ENCODE measurements at regions of chr1 and their contacts with region 1.

Region 1: GRCh38 chr1:183543619-183544204 is 46.5 kb downstream of the NCF2 start:
- DNase-seq: peak in 1 of 2 experiments; percentile 62
- H3K4me3 ChIP-seq: no peak overlapping the region
- H3K4me3 Mint-ChIP-seq: no peak overlapping the region
- H3K27ac Mint-ChIP-seq: no peak overlapping the region
- H3K4me1 ChIP-seq: peaks cover 6% of the 10 kb centered on the region; the same call in 1 of the 2 replicates
- H3K4me1 Mint-ChIP-seq: peaks cover 13% of the 10 kb centered on the region
- H3K27me3 ChIP-seq: no peaks in the 10 kb centered on the region
- H3K27me3 Mint-ChIP-seq: no peaks in the 10 kb centered on the region
- CTCF ChIP-seq: peak; percentile 57 to 80

Region 2: DNA sequence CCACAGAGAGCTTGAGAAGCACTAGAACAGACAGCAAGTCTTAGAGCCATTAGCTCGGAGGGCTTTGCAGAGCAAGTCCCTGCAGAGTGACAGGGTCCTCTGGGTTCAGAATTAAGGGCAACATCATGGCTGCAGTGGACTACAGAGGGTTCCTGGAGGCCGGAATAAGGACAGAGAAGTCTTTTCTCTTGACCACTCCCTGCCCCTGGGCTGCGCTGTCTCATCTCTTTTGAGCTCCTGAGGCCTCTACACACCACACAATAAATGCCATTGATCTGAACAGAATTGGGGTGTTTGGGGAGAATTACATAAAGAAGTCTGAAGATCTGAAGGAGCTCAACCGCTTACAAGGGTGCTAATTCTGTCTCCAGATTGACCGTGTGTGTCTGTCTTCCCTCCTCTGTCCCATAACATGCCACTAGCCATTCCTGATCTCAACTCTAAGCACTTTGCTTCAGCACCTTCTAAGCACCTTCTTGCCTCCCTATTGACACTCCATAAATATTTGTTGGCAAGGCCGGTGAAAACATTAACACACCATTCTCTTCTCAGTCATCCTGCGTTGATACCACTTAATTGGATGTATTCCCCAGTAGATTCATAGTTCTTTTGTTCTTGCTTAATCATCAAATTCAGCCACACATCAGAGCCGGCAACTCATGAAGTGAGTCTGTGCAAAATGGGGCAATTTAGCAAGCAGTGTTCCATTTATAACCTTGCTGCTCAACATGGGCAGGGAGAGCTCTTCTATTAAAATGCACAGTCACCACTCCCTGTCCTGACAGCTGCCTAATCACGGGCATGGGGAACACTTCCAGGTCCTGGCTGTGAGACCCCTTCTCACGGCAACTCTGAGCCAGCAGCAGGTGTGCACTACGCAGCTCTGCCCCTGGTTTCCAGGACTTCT is 175.3 kb before region 1 on chr1:
- CTCF ChIA-PET with region 1: no interaction called
- POLR2A ChIA-PET with region 1: no interaction called
- intact Hi-C with region 1: loop called (anchors 1 kb)
- DNase-seq: peak in 1 of 2 experiments; percentile 10
- H3K4me3 ChIP-seq: no peak overlapping the region
- H3K4me3 Mint-ChIP-seq: no peak overlapping the region
- H3K27ac Mint-ChIP-seq: no peak overlapping the region
- H3K4me1 ChIP-seq: peaks cover 7% of the 10 kb centered on the region
- H3K4me1 Mint-ChIP-seq: peaks cover 17% of the 10 kb centered on the region
- H3K27me3 ChIP-seq: no peaks in the 10 kb centered on the region
- H3K27me3 Mint-ChIP-seq: no peaks in the 10 kb centered on the region
- CTCF ChIP-seq: no peak

Region 3: GRCh38 chr1:183416850-183417771 is 126.6 kb before region 1 on chr1:
- CTCF ChIA-PET with region 1: no interaction called
- POLR2A ChIA-PET with region 1: no interaction called
- intact Hi-C with region 1: no loop called
- DNase-seq: peak in 1 of 2 experiments; percentile 34
- H3K4me3 ChIP-seq: peak overlapping the region; percentile 68
- H3K4me3 Mint-ChIP-seq: peak overlapping the region; percentile 79
- H3K27ac Mint-ChIP-seq: no peak overlapping the region
- H3K4me1 ChIP-seq: peaks cover 11% of the 10 kb centered on the region; the same call in 1 of the 2 replicates
- H3K4me1 Mint-ChIP-seq: peaks cover 30% of the 10 kb centered on the region
- H3K27me3 ChIP-seq: no peaks in the 10 kb centered on the region
- H3K27me3 Mint-ChIP-seq: no peaks in the 10 kb centered on the region
- CTCF ChIP-seq: no peak

Measured in Caco-2 (cell line).